ENCODE measurements at regions of chr3 and their contacts with region 1.

Region 1: GRCh38 chr3:116770815-116771450 is 61.4 kb downstream of the TUSC7 start:
- DNase-seq: peak; percentile 78
- H3K4me3 ChIP-seq: no peak overlapping the region
- H3K27ac ChIP-seq: no peak overlapping the region
- H3K4me1 ChIP-seq: peaks cover 0 to 15% (median 9%) of the 10 kb centered on the region in 4 donors
- H3K27me3 ChIP-seq: no peaks in the 10 kb centered on the region
- CTCF ChIP-seq: peak; percentile 87 to 94 (median 91)
- EP300 ChIP-seq: no peak
- POLR2A ChIP-seq: no peak

Region 2: GRCh38 chr3:116863822-116864589 is 93.1 kb after region 1 on chr3:
- intact Hi-C with region 1: loop called (anchors 5 kb)
- DNase-seq: no peak
- H3K4me3 ChIP-seq: peak overlapping the region; percentile 26 to 48 (median 39)
- H3K27ac ChIP-seq: no peak overlapping the region
- H3K4me1 ChIP-seq: peaks cover 0 to 24% (median 11%) of the 10 kb centered on the region in 4 donors
- H3K27me3 ChIP-seq: no peaks in the 10 kb centered on the region
- CTCF ChIP-seq: peak in 2 of 4 experiments; percentile 38 to 54
- EP300 ChIP-seq: no peak
- POLR2A ChIP-seq: no peak

Region 3: GRCh38 chr3:117019082-117019713 is 248.3 kb after region 1 on chr3:
- intact Hi-C with region 1: loop called (anchors 10 kb)
- DNase-seq: peak; percentile 75
- H3K4me3 ChIP-seq: no peak overlapping the region
- H3K27ac ChIP-seq: no peak overlapping the region
- H3K4me1 ChIP-seq: no peaks in the 10 kb centered on the region
- H3K27me3 ChIP-seq: no peaks in the 10 kb centered on the region
- CTCF ChIP-seq: peak; percentile 51 to 85 (median 71)
- EP300 ChIP-seq: no peak
- POLR2A ChIP-seq: no peak

Region 4: GRCh38 chr3:117473981-117474538 is 703.1 kb after region 1 on chr3:
- intact Hi-C with region 1: no loop called
- DNase-seq: no peak
- H3K4me3 ChIP-seq: no peak overlapping the region
- H3K27ac ChIP-seq: no peak overlapping the region
- H3K4me1 ChIP-seq: no peaks in the 10 kb centered on the region
- H3K27me3 ChIP-seq: no peaks in the 10 kb centered on the region
- CTCF ChIP-seq: no peak
- EP300 ChIP-seq: no peak
- POLR2A ChIP-seq: no peak

Region 5: DNA sequence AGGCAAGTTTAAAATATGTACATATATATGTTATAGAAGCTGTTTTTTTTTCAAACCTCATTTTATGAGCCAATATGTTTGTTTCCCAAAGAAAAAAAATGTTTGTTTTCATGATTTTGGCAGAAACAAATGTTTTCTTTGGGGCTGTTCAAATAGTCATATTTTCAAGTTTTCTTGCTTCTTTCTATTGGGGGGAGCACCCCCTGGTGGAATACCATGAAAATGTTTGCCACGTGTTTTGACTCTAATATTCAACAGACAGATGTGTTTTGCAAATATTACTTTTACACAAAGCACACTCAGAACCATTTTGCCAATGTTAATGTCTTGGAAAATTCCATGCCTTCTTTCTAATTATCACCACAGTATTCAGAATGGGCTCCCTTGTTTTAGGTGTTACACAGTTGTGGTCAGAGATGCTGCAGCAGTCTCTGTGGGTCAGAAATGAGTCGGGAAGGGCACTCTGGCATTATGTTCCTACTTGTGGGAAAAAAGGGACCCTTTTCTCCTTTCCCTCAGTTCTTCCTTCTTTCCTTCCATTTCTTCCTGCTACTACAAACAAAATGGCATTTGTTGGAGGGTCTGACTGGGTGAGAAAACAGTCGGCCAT is 755.6 kb after region 1 on chr3:
- intact Hi-C with region 1: loop called (anchors 10 kb)
- DNase-seq: no peak
- H3K4me3 ChIP-seq: no peak overlapping the region
- H3K27ac ChIP-seq: no peak overlapping the region
- H3K4me1 ChIP-seq: peaks cover 0 to 9% (median 3%) of the 10 kb centered on the region in 4 donors
- H3K27me3 ChIP-seq: no peaks in the 10 kb centered on the region
- CTCF ChIP-seq: peak in 3 of 4 experiments; percentile 30 to 42 (median 40)
- EP300 ChIP-seq: no peak
- POLR2A ChIP-seq: no peak

Region 6: DNA sequence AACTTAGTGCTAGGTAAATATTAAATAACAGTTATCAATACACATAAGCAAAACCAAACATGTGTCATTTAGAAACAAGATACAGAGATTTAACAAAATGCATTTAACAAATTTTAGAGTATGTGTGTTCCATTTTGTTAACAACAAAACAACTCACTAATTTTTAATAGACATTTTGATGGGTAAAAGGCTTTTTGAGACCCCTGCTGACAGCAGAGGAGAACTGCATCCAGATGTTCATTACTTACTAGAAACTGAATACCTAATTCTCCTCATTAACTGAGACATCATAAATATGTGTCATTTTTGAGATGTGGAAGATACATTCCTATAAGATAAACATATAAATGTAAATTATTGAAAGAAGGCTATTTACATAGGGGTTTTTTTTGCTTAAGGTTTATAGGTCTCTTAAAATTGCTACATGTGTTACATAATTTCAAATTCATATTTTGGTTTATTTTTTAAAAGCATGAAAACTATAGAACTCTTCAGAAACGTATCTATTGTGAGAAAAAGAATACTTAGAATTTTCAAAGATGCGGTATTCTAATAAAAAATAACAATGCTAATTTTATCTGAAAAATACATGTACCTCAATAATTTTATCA is 948.5 kb after region 1 on chr3:
- intact Hi-C with region 1: loop called (anchors 5 kb)
- DNase-seq: no peak
- H3K4me3 ChIP-seq: no peak overlapping the region
- H3K27ac ChIP-seq: no peak overlapping the region
- H3K4me1 ChIP-seq: no peaks in the 10 kb centered on the region
- H3K27me3 ChIP-seq: no peaks in the 10 kb centered on the region
- CTCF ChIP-seq: peak; percentile 28 to 78 (median 60)
- EP300 ChIP-seq: no peak
- POLR2A ChIP-seq: no peak

Region 7: DNA sequence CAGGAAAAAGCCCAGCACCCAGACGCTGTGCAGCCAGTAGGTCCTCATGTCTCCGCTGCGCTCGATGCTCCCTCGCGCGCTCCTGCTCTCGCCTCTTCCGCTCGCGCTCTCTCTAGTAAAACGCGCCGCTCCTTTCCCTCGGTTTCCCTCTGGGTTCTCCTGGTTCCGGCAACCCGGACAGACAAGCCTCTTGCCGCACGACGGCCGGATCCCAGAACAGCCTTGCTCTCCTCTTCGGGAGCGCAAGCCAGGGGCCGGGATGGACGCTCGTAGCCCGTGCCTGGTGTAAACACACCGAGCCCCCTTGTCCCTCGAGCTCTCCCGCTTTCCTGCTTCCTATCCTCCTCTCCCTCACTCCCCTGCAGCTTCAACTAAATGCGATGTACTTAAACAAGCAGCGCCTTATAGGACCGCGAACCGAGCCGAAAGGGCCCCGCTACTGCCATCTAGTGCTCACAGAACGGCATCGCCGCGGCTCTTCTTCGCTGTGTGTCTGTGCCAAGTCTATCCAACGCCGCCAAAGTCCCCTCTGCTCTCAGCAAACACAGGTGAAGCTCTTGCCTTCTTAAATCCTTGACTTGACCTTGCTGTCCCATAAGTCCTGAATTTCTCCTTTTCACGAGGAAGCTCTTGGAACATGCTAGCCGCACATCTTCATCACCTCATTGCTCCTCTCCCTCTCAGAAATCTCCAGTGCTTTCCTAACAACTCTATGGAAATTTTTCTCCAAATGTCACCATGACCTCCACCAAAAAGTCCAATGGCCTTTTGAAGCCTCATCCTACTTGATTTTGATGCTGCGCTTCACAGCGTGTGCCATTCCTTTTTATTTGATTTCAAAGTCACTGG is 1226.5 kb after region 1 on chr3:
- intact Hi-C with region 1: loop called (anchors 10 kb)
- DNase-seq: peak; percentile 90
- H3K4me3 ChIP-seq: peak overlapping the region; percentile 41 to 67 (median 58)
- H3K27ac ChIP-seq: peak overlapping the region in 3 of 4 donors; percentile 58 to 75 (median 63)
- H3K4me1 ChIP-seq: peaks cover 0 to 9% (median 4%) of the 10 kb centered on the region in 4 donors
- H3K27me3 ChIP-seq: peaks cover 0 to 6% (median 0%) of the 10 kb centered on the region in 3 donors
- CTCF ChIP-seq: peak; percentile 58 to 87 (median 68)
- EP300 ChIP-seq: no peak
- POLR2A ChIP-seq: no peak

Region 8: GRCh38 chr3:118628704-118629341 is 1857.9 kb after region 1 on chr3:
- intact Hi-C with region 1: loop called (anchors 10 kb)
- DNase-seq: peak; percentile 75
- H3K4me3 ChIP-seq: no peak overlapping the region
- H3K27ac ChIP-seq: no peak overlapping the region
- H3K4me1 ChIP-seq: no peaks in the 10 kb centered on the region
- H3K27me3 ChIP-seq: no peaks in the 10 kb centered on the region
- CTCF ChIP-seq: peak; percentile 54 to 82 (median 70)
- EP300 ChIP-seq: no peak
- POLR2A ChIP-seq: no peak